ENCODE measurements at regions of chr6 and their contacts with region 1.

Region 1: GRCh38 chr6:36615018-36615761 is 21.0 kb downstream of the SRSF3 start:
- DNase-seq: no peak
- ATAC-seq: peak; percentile 84
- H3K4me3 Mint-ChIP-seq: no peak overlapping the region
- H3K27ac Mint-ChIP-seq: peak overlapping the region; percentile 66
- H3K4me1 Mint-ChIP-seq: peaks cover 21% of the 10 kb centered on the region
- H3K27me3 Mint-ChIP-seq: no peaks in the 10 kb centered on the region
- CTCF ChIP-seq: peak; percentile 83

Region 2: GRCh38 chr6:36594029-36594815 is 21.0 kb before region 1 on chr6 and contains the start of gene SRSF3:
- CTCF ChIA-PET with region 1: interaction called, 11 read pairs
- POLR2A ChIA-PET with region 1: interaction called, 83 read pairs
- intact Hi-C with region 1: no loop called
- DNase-seq: peak; percentile 87
- ATAC-seq: peak; percentile 91
- H3K4me3 Mint-ChIP-seq: peak within 1 kb of the TSS; percentile 96
- H3K27ac Mint-ChIP-seq: peak within 1 kb of the TSS; percentile 99
- H3K4me1 Mint-ChIP-seq: peaks cover 51% of the 10 kb centered on the region
- H3K27me3 Mint-ChIP-seq: no peaks in the 10 kb centered on the region
- CTCF ChIP-seq: no peak
- total RNA-seq, gene SRSF3: 421 and 494 TPM in 2 replicates

Region 3: DNA sequence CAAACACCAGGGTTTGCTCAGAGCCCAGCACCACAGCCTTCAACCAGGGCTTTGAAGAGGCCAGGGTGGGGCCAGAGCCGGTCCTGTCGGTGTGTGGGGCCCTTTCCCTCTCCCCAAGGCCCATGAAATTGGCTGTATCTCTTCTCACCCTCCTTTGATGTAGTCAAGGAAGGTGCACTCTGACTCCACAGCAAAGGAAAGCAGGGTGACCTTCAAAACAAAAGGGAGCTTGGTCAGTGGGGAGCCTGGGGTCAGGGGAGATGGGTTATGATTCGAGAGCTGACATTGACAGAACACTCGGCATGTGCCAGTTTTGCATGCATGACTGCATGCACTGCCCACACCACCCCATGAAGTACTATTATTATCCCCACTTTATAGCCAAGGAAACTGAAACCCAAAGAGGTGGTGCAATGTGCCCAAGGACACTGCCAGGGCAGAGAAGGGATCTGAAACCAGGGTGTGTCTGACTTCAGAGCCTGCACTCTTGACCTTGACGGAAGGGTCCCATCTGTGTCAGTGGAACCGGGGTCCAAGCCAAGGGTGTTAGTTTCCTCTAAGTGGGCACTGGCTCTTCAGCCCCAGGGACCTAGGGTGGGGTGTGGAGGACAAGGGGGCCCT is 137.8 kb after region 1 on chr6:
- CTCF ChIA-PET with region 1: interaction called, 121 read pairs
- POLR2A ChIA-PET with region 1: interaction called, 41 read pairs
- intact Hi-C with region 1: no loop called
- DNase-seq: no peak
- ATAC-seq: peak; percentile 49
- H3K4me3 Mint-ChIP-seq: peak overlapping the region; percentile 73
- H3K27ac Mint-ChIP-seq: peak overlapping the region; percentile 97
- H3K4me1 Mint-ChIP-seq: peaks cover 92% of the 10 kb centered on the region
- H3K27me3 Mint-ChIP-seq: no peaks in the 10 kb centered on the region
- CTCF ChIP-seq: no peak

Region 4: GRCh38 chr6:36780442-36781177 is 165.4 kb after region 1 on chr6:
- CTCF ChIA-PET with region 1: interaction called, 42 read pairs
- POLR2A ChIA-PET with region 1: interaction called, 13 read pairs
- intact Hi-C with region 1: loop called (anchors 1 kb)
- DNase-seq: no peak
- ATAC-seq: peak; percentile 35
- H3K4me3 Mint-ChIP-seq: peak overlapping the region; percentile 17
- H3K27ac Mint-ChIP-seq: peak overlapping the region; percentile 76
- H3K4me1 Mint-ChIP-seq: peaks cover 25% of the 10 kb centered on the region
- H3K27me3 Mint-ChIP-seq: peaks cover 10% of the 10 kb centered on the region
- CTCF ChIP-seq: no peak

Region 5: GRCh38 chr6:37207903-37208456 is 592.8 kb after region 1 on chr6:
- CTCF ChIA-PET with region 1: no interaction called
- POLR2A ChIA-PET with region 1: no interaction called
- intact Hi-C with region 1: loop called (anchors 2 kb)
- DNase-seq: peak; percentile 79
- ATAC-seq: peak; percentile 97
- H3K4me3 Mint-ChIP-seq: no peak overlapping the region
- H3K27ac Mint-ChIP-seq: peak overlapping the region; percentile 5
- H3K4me1 Mint-ChIP-seq: peaks cover 20% of the 10 kb centered on the region
- H3K27me3 Mint-ChIP-seq: no peaks in the 10 kb centered on the region
- CTCF ChIP-seq: no peak